ENCODE measurements at regions of chr7 and their contacts with region 1.

Region 1: DNA sequence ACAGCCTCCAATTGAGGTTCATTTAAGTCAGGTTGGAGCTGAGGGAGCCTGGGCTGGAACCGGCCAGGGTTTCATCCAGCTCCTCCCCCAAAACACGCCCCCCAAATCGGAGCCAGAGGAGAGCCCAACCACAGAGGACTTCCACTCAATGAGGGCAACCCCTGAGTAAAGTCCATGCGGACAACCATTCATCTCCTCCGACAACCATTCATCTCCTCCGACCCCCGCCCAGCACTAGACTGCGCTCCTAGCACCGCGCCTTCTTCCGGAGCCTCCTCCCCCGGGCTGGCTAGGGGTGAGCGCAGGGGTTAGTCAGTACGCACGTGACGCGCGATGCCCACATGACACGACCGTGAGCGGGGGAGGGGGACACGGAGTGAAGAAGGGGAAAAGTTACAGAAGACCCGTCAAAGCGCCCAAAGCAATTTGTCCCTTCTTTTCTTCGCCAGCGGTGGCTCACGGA is 1.4 kb downstream of the MAGI2 start:
- DNase-seq: peak; percentile 84 to 86
- ATAC-seq: peak; percentile 79 to 93 (median 86)
- H3K4me3 ChIP-seq: peak overlapping the region; percentile 64 to 95 (median 83)
- H3K27ac ChIP-seq: peak overlapping the region; percentile 87 to 98 (median 93)
- H3K4me1 ChIP-seq: peaks cover 4 to 36% (median 18%) of the 10 kb centered on the region in 9 donors
- H3K27me3 ChIP-seq: peaks cover 0 to 41% (median 0%) of the 10 kb centered on the region in 7 donors
- CTCF ChIP-seq: no peak

Region 2: DNA sequence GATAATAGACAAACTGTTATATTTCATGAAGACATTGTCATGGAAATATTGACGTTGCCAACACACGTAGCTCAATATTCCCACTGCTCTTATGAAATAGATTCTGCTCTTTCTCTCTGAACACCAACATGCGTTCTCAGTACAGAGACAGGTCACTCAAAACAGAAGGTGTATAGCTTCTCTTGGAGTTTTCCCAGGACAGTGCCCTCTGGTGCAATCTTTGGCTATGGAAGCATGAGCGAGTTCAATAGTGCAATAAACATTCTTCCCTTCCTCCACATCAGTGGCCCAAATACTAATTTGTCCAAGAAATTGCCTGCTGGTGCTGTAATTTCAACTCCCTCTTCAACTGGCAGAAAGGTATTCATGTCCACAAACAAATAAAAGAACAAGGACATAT is 143.9 kb before region 1 on chr7:
- intact Hi-C with region 1: loop called in 1 of 10 experiments (anchors 10 kb)
- DNase-seq: no peak
- ATAC-seq: peak in 4 of 8 donors; percentile 53 to 89 (median 72)
- H3K4me3 ChIP-seq: no peak overlapping the region
- H3K27ac ChIP-seq: no peak overlapping the region
- H3K4me1 ChIP-seq: peaks cover 0 to 3% (median 0%) of the 10 kb centered on the region in 9 donors
- H3K27me3 ChIP-seq: no peaks in the 10 kb centered on the region
- CTCF ChIP-seq: peak in 3 of 9 donors; percentile 7 to 37 (median 21)

Region 3: GRCh38 chr7:79341902-79342301 is 110.2 kb before region 1 on chr7:
- intact Hi-C with region 1: loop called in 3 of 10 experiments (anchors 5 to 10 kb)
- DNase-seq: no peak
- ATAC-seq: no peak
- H3K4me3 ChIP-seq: no peak overlapping the region
- H3K27ac ChIP-seq: no peak overlapping the region
- H3K4me1 ChIP-seq: peaks cover 0 to 3% (median 0%) of the 10 kb centered on the region in 9 donors
- H3K27me3 ChIP-seq: no peaks in the 10 kb centered on the region
- CTCF ChIP-seq: peak in 2 of 9 donors; percentile 24 to 32

Region 4: GRCh38 chr7:79403451-79403850 is 48.6 kb before region 1 on chr7:
- intact Hi-C with region 1: loop called in 2 of 10 experiments (anchors 5 to 10 kb)
- DNase-seq: no peak
- ATAC-seq: no peak
- H3K4me3 ChIP-seq: no peak overlapping the region
- H3K27ac ChIP-seq: peak overlapping the region in 1 of 10 donors; percentile 6
- H3K4me1 ChIP-seq: peaks cover 0 to 57% (median 18%) of the 10 kb centered on the region in 9 donors
- H3K27me3 ChIP-seq: no peaks in the 10 kb centered on the region
- CTCF ChIP-seq: no peak

Measured in heart right ventricle (tissue), 16 donors.